ENCODE measurements at regions of chr11 and their contacts with region 1.

Region 1: GRCh38 chr11:47259178-47259977 is 1.6 kb downstream of the NR1H3 start:
- DNase-seq: peak; percentile 80
- ATAC-seq: peak; percentile 78
- H3K4me3 Mint-ChIP-seq: peak overlapping the region; percentile 16
- H3K27ac Mint-ChIP-seq: peak overlapping the region; percentile 78
- H3K4me1 Mint-ChIP-seq: peaks cover 24% of the 10 kb centered on the region
- H3K27me3 Mint-ChIP-seq: no peaks in the 10 kb centered on the region
- CTCF ChIP-seq: peak; percentile 38; the same call in 1 of the 2 replicates

Region 2: DNA sequence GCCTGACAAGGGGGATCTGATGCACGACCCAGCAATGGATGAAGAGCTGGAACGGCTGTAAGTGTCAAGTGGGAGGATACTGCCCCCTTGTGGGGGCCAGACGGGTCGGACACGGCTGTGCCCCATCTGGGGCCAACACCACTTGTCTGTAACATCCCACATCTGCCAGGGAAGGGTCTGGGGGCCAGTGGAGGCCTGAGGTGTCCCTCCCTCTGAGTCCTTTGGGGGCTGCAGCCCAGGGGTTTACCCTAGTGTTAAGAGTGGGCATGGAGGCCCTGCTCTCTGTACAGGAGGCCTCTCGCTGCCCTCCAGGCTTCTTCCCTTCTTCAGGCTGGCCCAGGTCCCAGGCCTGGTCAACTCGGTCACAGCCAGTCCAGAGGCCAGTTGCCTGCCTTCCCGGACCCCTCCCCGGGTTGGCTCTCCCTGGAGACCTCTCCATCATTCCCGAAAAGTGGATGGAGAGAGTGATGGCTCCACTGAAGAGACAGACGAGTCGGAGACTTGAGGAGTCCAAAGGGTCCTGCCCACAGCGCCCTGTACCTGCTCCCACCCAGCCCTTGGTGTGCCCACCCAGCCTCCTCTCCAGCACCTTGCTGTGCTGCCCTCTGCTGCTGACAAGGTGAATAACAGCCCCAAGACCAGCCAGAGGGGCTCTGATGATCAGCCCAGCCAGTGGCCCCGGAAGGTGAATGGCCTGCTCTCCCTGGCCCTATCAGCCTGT is 98.1 kb before region 1 on chr11:
- CTCF ChIA-PET with region 1: interaction called, 25 read pairs
- POLR2A ChIA-PET with region 1: interaction called, 3 read pairs
- DNase-seq: peak; percentile 82
- ATAC-seq: peak; percentile 83
- H3K4me3 Mint-ChIP-seq: no peak overlapping the region
- H3K27ac Mint-ChIP-seq: no peak overlapping the region
- H3K4me1 Mint-ChIP-seq: 0 out of 2 replicates have a peak, but pooled peaks cover 3% of the 10 kb centered on the region
- H3K27me3 Mint-ChIP-seq: no peaks in the 10 kb centered on the region
- CTCF ChIP-seq: peak; percentile 53; the same call in 1 of the 2 replicates

Region 3: GRCh38 chr11:47186076-47186936 is 73.1 kb before region 1 on chr11 and contains the start of gene PACSIN3:
- CTCF ChIA-PET with region 1: interaction called, 101 read pairs
- POLR2A ChIA-PET with region 1: interaction called, 12 read pairs
- DNase-seq: peak; percentile 69
- ATAC-seq: peak; percentile 8
- H3K4me3 Mint-ChIP-seq: peak within 1 kb of the TSS; percentile 81
- H3K27ac Mint-ChIP-seq: peak within 1 kb of the TSS; percentile 86
- H3K4me1 Mint-ChIP-seq: peaks cover 19% of the 10 kb centered on the region
- H3K27me3 Mint-ChIP-seq: peaks cover 9% of the 10 kb centered on the region
- CTCF ChIP-seq: no peak
- total RNA-seq, gene PACSIN3: 74.5 to 77.1 TPM (median 76.8 TPM) in 3 replicates

Region 4: GRCh38 chr11:47233989-47234668 is 25.2 kb before region 1 on chr11:
- CTCF ChIA-PET with region 1: interaction called, 84 read pairs
- POLR2A ChIA-PET with region 1: interaction called, 3 read pairs
- DNase-seq: peak; percentile 22
- ATAC-seq: peak; percentile 86
- H3K4me3 Mint-ChIP-seq: no peak overlapping the region
- H3K27ac Mint-ChIP-seq: peak overlapping the region; percentile 75
- H3K4me1 Mint-ChIP-seq: peaks cover 3% of the 10 kb centered on the region; the same call in 1 of the 2 replicates
- H3K27me3 Mint-ChIP-seq: no peaks in the 10 kb centered on the region
- CTCF ChIP-seq: no peak

Region 5: GRCh38 chr11:47248664-47249377 is 10.6 kb before region 1 on chr11 and contains the start of gene ACP2:
- CTCF ChIA-PET with region 1: interaction called, 120 read pairs
- POLR2A ChIA-PET with region 1: interaction called, 44 read pairs
- DNase-seq: peak; percentile 91
- ATAC-seq: peak; percentile 93
- H3K4me3 Mint-ChIP-seq: peak within 1 kb of the TSS; percentile 98
- H3K27ac Mint-ChIP-seq: peak within 1 kb of the TSS; percentile 100
- H3K4me1 Mint-ChIP-seq: peaks cover 9% of the 10 kb centered on the region
- H3K27me3 Mint-ChIP-seq: no peaks in the 10 kb centered on the region
- CTCF ChIP-seq: no peak
- total RNA-seq, gene ACP2: 18.7 to 19.6 TPM (median 19.2 TPM) in 3 replicates

Region 6: DNA sequence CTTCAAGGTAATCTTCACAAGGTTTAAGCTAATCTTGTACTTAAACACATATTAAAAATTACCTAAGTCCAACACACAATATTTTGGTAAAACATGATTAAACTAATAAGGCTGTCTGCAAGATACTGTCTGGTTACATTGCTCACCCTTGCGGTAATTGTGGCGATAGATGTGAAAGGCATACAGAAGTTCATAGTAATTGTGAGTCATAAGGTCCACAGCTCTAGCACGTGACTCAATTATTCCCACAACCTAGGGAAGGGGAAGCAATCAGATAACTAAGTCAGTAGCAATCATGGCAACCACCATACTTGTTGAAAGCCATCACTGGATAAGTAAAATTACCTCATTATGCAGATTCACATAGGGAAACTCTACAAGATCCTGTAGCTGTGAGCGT is 538.3 kb after region 1 on chr11:
- CTCF ChIA-PET with region 1: no interaction called
- POLR2A ChIA-PET with region 1: no interaction called
- DNase-seq: no peak
- ATAC-seq: no peak
- H3K4me3 Mint-ChIP-seq: no peak overlapping the region
- H3K27ac Mint-ChIP-seq: no peak overlapping the region
- H3K4me1 Mint-ChIP-seq: no peaks in the 10 kb centered on the region
- H3K27me3 Mint-ChIP-seq: no peaks in the 10 kb centered on the region
- CTCF ChIP-seq: no peak